Heart left ventricle (tissue), 16 donors: ENCODE measurements at regions of chr11 and their contacts with region 1.

Region 1: DNA sequence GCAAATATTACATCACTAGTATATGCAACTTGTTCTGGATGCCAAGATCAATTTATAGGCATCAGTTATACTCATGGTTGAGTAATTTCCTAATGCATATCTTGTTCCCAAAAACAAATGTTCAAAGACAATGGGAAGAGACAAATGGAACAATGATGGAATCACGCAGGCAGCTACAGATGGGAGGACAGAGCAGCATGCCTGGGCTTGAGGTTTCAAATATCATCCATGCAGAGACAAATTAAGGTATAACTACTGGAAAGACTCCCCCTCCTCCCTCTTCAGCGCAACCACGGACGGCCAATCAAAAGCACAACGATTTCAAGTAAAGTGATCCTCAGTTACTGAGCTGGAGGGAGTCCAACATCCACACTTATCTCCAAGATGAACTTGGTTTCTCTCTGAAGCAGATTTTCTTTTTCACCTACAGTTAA is 106.8 kb downstream of the CCDC83 start:
- DNase-seq: no peak
- ATAC-seq: peak in 1 of 4 donors; percentile 27
- H3K4me3 ChIP-seq: no peak overlapping the region
- H3K27ac ChIP-seq: no peak overlapping the region
- H3K4me1 ChIP-seq: peaks cover 0 to 25% (median 9%) of the 10 kb centered on the region in 12 donors
- H3K27me3 ChIP-seq: no peaks in the 10 kb centered on the region
- CTCF ChIP-seq: no peak
- POLR2A ChIP-seq: no peak

Region 2: GRCh38 chr11:85643191-85643614 is 318.7 kb before region 1 on chr11:
- intact Hi-C with region 1: no loop called
- DNase-seq: peak in 4 of 5 donors; percentile 37 to 72 (median 66)
- ATAC-seq: peak in 3 of 4 donors; percentile 26 to 37 (median 29)
- H3K4me3 ChIP-seq: peak overlapping the region in 3 of 12 donors; percentile 8 to 35 (median 17)
- H3K27ac ChIP-seq: peak overlapping the region in 5 of 12 donors; percentile 6 to 49 (median 29)
- H3K4me1 ChIP-seq: peaks cover 0 to 20% (median 7%) of the 10 kb centered on the region in 12 donors
- H3K27me3 ChIP-seq: no peaks in the 10 kb centered on the region
- CTCF ChIP-seq: no peak
- POLR2A ChIP-seq: no peak

Region 3: GRCh38 chr11:86003654-86004053 is 41.7 kb after region 1 on chr11:
- intact Hi-C with region 1: loop called in 1 of 10 experiments (anchors 5 kb)
- DNase-seq: no peak
- ATAC-seq: no peak
- H3K4me3 ChIP-seq: no peak overlapping the region
- H3K27ac ChIP-seq: no peak overlapping the region
- H3K4me1 ChIP-seq: peaks cover 0 to 8% (median 0%) of the 10 kb centered on the region in 12 donors
- H3K27me3 ChIP-seq: no peaks in the 10 kb centered on the region
- CTCF ChIP-seq: no peak
- POLR2A ChIP-seq: no peak